ENCODE measurements at regions of chr15 and their contacts with region 1.

Region 1: GRCh38 chr15:56918046-56918938 is at the start of gene TCF12:
- DNase-seq: peak; percentile 58 to 93
- H3K4me3 ChIP-seq: peak within 1 kb of the TSS; percentile 91
- H3K27ac ChIP-seq: 0 out of 2 replicates have a peak within 1 kb of the TSS, but pooled peaks have one; percentile 4
- H3K4me1 ChIP-seq: peaks cover 8% of the 10 kb centered on the region; the same call in 1 of the 2 replicates
- H3K27me3 ChIP-seq: no peaks in the 10 kb centered on the region
- CTCF ChIP-seq: no peak; the same call in 1 of the 2 replicates
- total RNA-seq, gene TCF12: 60.1 and 67.8 TPM in 2 replicates

Region 2: GRCh38 chr15:56725386-56725785 is 192.9 kb before region 1 on chr15:
- CTCF ChIA-PET with region 1: interaction called, 16 read pairs
- POLR2A ChIA-PET with region 1: no interaction called
- intact Hi-C with region 1: no loop called
- DNase-seq: no peak
- H3K4me3 ChIP-seq: no peak overlapping the region
- H3K27ac ChIP-seq: no peak overlapping the region
- H3K4me1 ChIP-seq: no peaks in the 10 kb centered on the region
- H3K27me3 ChIP-seq: no peaks in the 10 kb centered on the region
- CTCF ChIP-seq: no peak

Region 3: GRCh38 chr15:56732921-56733797 is 185.1 kb before region 1 on chr15 and contains the start of gene ZNF280D:
- CTCF ChIA-PET with region 1: no interaction called
- POLR2A ChIA-PET with region 1: no interaction called
- intact Hi-C with region 1: loop called (anchors 2 kb)
- DNase-seq: peak; percentile 61 to 84
- H3K4me3 ChIP-seq: peak within 1 kb of the TSS; percentile 88
- H3K27ac ChIP-seq: peak within 1 kb of the TSS; percentile 58
- H3K4me1 ChIP-seq: peaks cover 10% of the 10 kb centered on the region; the same call in 1 of the 2 replicates
- H3K27me3 ChIP-seq: no peaks in the 10 kb centered on the region
- CTCF ChIP-seq: no peak
- total RNA-seq, gene ZNF280D: 21.9 and 26.8 TPM in 2 replicates

Region 4: DNA sequence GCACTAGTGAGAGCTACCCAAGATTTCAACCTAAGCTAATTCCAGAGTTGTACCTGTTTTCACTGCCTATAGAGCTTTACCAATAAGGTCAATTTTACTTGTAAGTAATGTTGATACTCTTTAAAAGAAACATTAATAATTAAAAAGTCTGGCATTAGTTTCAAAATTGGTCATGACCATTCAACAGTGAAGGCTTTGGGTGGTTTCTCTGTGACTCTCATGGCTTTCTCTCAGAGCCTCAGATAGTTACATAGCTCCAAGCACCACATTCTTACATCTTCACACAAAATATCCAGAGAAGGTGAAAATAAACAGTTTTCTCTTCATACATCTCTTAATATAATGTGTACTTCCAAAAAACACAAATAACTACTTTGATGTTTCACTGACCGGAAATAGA is 61.4 kb before region 1 on chr15:
- CTCF ChIA-PET with region 1: no interaction called
- POLR2A ChIA-PET with region 1: no interaction called
- intact Hi-C with region 1: no loop called
- DNase-seq: no peak
- H3K4me3 ChIP-seq: no peak overlapping the region
- H3K27ac ChIP-seq: no peak overlapping the region
- H3K4me1 ChIP-seq: no peaks in the 10 kb centered on the region
- H3K27me3 ChIP-seq: no peaks in the 10 kb centered on the region
- CTCF ChIP-seq: no peak

Region 5: DNA sequence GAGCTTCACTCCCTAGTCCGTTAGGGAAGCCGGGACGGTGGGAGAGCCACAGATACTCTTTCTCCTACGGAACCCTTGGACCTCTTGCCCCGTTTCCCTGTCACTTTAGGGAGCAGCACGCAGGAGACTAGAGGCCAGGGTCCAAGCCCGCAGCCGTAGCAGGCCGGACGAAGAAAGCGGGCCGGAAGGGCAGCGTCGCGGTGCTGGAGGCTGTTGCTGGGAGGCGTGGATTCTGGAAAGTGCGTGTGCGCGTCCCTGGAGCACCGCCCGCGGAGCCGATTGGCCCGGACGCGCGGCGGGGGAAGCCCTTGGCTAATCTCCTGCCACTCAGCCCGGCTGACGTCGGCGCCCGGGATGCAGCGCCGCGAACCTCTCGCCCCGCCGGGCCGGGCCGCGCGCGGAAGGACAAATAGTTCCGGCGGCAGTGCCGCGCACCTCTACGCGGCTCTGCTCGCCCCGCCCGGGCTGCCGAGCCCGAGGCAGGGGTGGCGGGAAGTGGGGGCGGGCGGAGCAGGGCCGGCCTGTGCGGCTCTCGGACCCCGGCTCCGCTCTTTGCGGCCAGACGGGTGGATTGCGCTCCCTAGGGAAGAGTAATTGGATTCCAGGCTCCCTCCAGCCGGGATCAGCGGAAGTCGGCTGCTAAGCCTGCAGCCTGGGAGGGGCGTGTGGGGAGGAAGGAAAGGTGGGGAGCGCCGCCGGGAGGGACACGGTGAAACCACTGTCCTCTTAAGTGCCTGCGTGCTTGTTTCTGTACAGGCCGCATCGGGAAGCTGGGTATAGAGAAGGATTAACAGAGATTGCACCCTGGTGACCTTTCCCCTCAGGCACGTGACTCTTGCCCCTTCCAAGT is 31.1 kb before region 1 on chr15:
- CTCF ChIA-PET with region 1: no interaction called
- POLR2A ChIA-PET with region 1: interaction called, 4 read pairs
- intact Hi-C with region 1: loop called (anchors 1 kb)
- DNase-seq: peak; percentile 66 to 92
- H3K4me3 ChIP-seq: peak overlapping the region; percentile 74
- H3K27ac ChIP-seq: peak overlapping the region; percentile 62
- H3K4me1 ChIP-seq: peaks cover 17% of the 10 kb centered on the region
- H3K27me3 ChIP-seq: no peaks in the 10 kb centered on the region
- CTCF ChIP-seq: no peak

Region 6: GRCh38 chr15:57138349-57138788 is 220.1 kb after region 1 on chr15:
- CTCF ChIA-PET with region 1: no interaction called
- POLR2A ChIA-PET with region 1: no interaction called
- intact Hi-C with region 1: loop called (anchors 2 kb)
- DNase-seq: peak in 1 of 2 experiments; percentile 9
- H3K4me3 ChIP-seq: no peak overlapping the region
- H3K27ac ChIP-seq: no peak overlapping the region
- H3K4me1 ChIP-seq: no peaks in the 10 kb centered on the region
- H3K27me3 ChIP-seq: no peaks in the 10 kb centered on the region
- CTCF ChIP-seq: peak; percentile 74

Region 7: GRCh38 chr15:57306161-57306943 is 388.1 kb after region 1 on chr15:
- CTCF ChIA-PET with region 1: no interaction called
- POLR2A ChIA-PET with region 1: interaction called, 3 read pairs
- intact Hi-C with region 1: loop called (anchors 1 kb)
- DNase-seq: peak in 1 of 2 experiments; percentile 78
- H3K4me3 ChIP-seq: no peak overlapping the region; the same call in 1 of the 2 replicates
- H3K27ac ChIP-seq: no peak overlapping the region
- H3K4me1 ChIP-seq: no peaks in the 10 kb centered on the region
- H3K27me3 ChIP-seq: no peaks in the 10 kb centered on the region
- CTCF ChIP-seq: peak; percentile 78

Region 8: DNA sequence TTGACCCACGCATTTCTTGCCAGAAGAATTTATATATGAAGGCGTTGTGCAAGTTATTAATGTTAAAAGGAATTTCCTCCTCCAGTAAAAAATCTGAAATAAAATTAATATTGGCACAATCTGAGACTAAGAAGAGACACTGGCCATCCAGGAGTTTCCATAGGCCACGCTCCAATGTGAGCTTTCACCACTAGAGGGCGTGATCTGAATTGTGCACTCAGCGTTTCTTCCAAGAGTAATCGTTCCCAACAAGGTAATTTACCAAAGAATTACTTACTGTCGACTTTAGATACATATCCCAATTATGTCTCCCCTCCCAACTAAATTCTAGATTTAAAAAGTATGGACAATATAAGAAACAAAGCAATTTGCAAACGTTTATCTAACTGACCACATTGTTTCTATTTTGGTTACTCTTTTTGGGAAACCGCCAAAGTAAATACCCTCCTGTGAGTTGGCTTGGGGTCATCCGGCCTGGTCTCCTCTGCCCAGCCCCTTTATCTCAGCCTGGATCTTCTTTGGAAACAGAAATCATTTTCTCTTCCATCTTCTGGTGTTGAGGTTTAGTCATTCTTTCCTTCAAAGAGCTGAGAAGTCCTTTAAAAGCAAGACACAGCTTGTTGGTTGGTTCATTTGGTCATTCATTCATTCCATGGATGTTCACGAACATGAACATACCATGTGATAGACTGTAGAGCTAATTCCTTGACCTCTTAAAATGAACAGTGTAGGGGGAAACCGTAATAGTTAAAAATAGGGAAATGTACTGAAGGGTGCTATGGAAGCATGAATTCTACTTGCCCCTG is 814.4 kb after region 1 on chr15:
- CTCF ChIA-PET with region 1: no interaction called
- POLR2A ChIA-PET with region 1: no interaction called
- intact Hi-C with region 1: no loop called
- DNase-seq: peak in 1 of 2 experiments; percentile 45
- H3K4me3 ChIP-seq: no peak overlapping the region
- H3K27ac ChIP-seq: no peak overlapping the region
- H3K4me1 ChIP-seq: no peaks in the 10 kb centered on the region
- H3K27me3 ChIP-seq: no peaks in the 10 kb centered on the region
- CTCF ChIP-seq: peak; percentile 85